Activated T-helper 1 cell treated with anti-CD3 and anti-CD28 coated beads, Interleukin-12 subunit alpha, Interleukin-12 subunit beta, Interleukin-2, Interleukin-4 antibody, amounts not matched to agents 30 ng/mL and 10 ng/mL and 1 ng/mL, durations not matched to agents 14 hours and 24 hours and 36 hours (primary cell): ENCODE measurements at regions of chr6 and their contacts with region 1.

Region 1: DNA sequence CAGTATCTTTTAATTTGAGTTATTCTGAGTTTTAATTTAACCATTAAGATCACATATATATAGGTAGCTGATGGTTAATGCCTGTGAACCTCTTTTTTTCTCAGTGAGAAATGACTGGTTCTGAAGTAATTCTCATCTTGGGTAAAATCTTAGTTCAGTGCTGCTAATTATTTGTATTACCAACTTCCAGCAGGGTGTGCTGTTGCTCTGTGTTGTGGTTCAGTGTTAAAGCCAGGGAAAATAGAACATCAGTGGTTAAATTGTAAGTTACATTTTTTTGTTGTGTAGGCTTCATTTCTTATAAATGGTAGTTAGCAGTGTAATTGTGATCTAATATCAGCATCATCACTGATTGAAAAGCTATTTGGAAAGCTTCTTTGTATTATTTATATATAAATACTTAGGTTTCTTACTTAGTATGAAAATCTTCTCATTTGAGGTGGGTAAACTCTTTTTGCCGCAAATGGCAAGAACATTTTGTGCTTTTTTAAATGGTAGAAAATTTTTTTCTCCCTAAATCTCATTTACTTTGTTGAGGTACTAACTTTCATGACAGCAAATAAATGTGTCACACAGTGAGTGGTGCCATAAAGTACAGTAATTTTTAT is 43.7 kb downstream of the CDC5L start:
- DNase-seq: no peak
- H3K4me3 Mint-ChIP-seq: no peak overlapping the region
- H3K27ac Mint-ChIP-seq: no peak overlapping the region
- H3K4me1 Mint-ChIP-seq: peaks cover 8% of the 10 kb centered on the region
- H3K27me3 Mint-ChIP-seq: no peaks in the 10 kb centered on the region

Region 2: DNA sequence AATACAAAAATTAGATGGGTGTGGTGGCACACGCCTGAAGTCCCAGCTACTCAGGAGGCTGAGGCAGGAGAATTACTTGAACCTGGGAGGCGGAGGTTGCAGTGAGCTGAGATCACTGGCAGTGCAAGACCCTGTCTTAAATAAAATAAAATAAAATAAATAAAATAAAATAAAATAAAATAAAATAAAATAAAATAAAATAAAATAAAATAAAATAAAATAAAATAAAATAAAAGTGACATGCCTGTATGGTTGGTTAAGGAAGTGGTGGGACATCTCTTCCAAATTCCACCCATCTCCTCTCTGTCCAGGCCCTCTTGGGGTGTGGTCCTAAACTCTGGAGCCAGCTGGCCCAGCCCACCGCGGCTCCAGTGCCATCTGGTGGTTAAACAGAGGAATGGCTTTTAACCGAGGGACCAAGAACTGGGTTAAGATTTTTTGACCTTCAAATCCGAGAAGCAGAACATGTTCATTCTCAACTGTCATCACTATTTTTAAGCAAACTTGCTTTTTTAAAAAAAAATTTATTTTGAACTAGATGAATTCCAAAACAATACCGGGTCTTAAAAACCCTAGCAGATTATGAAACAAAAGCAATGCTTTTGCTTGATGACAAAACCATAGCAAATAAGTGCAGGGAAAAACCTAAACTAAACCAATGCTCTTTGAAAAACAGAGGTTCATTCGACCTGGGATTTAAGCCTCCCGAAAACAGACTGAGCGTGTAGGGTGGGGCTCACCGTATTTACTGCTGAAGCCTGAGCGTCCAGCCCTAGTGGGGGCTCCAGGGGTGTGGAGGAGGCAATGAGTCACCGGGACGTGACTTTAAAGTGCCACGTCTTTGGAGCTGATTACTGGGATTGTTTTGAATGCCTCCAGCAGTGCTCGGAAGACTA is 25.1 kb after region 1 on chr6:
- intact Hi-C with region 1: loop called (anchors 1 kb)
- DNase-seq: no peak
- H3K4me3 Mint-ChIP-seq: no peak overlapping the region
- H3K27ac Mint-ChIP-seq: no peak overlapping the region
- H3K4me1 Mint-ChIP-seq: no peaks in the 10 kb centered on the region
- H3K27me3 Mint-ChIP-seq: peaks cover 5% of the 10 kb centered on the region

Region 3: GRCh38 chr6:44468835-44469234 is 37.6 kb after region 1 on chr6:
- intact Hi-C with region 1: loop called (anchors 1 kb)
- DNase-seq: no peak
- H3K4me3 Mint-ChIP-seq: no peak overlapping the region
- H3K27ac Mint-ChIP-seq: no peak overlapping the region
- H3K4me1 Mint-ChIP-seq: no peaks in the 10 kb centered on the region
- H3K27me3 Mint-ChIP-seq: peaks cover 14% of the 10 kb centered on the region

Region 4: GRCh38 chr6:44480097-44480541 is 48.9 kb after region 1 on chr6:
- intact Hi-C with region 1: no loop called
- DNase-seq: no peak
- H3K4me3 Mint-ChIP-seq: no peak overlapping the region
- H3K27ac Mint-ChIP-seq: no peak overlapping the region
- H3K4me1 Mint-ChIP-seq: no peaks in the 10 kb centered on the region
- H3K27me3 Mint-ChIP-seq: peaks cover 15% of the 10 kb centered on the region